Activated CD8-positive, alpha-beta T cell treated with anti-CD3 and anti-CD28 coated beads for 36 hours (primary cell): ENCODE measurements at regions of chr5 and their contacts with region 1.

Region 1: GRCh38 chr5:149667084-149667828 is 62.9 kb upstream of the PPARGC1B start:
- DNase-seq: peak; percentile 54
- ATAC-seq: peak; percentile 66
- H3K4me3 Mint-ChIP-seq: no peak overlapping the region
- H3K27ac Mint-ChIP-seq: no peak overlapping the region
- H3K4me1 Mint-ChIP-seq: no peaks in the 10 kb centered on the region
- H3K27me3 Mint-ChIP-seq: peaks cover 3% of the 10 kb centered on the region
- CTCF ChIP-seq: peak; percentile 86

Region 2: GRCh38 chr5:149063017-149063687 is 604.1 kb before region 1 on chr5 and contains the start of gene SH3TC2:
- CTCF ChIA-PET with region 1: no interaction called
- POLR2A ChIA-PET with region 1: no interaction called
- intact Hi-C with region 1: no loop called
- DNase-seq: no peak
- ATAC-seq: no peak
- H3K4me3 Mint-ChIP-seq: no peak within 1 kb of the TSS
- H3K27ac Mint-ChIP-seq: no peak within 1 kb of the TSS
- H3K4me1 Mint-ChIP-seq: no peaks in the 10 kb centered on the region
- H3K27me3 Mint-ChIP-seq: peaks cover 12% of the 10 kb centered on the region
- CTCF ChIP-seq: no peak
- total RNA-seq, gene SH3TC2: not detected

Region 3: GRCh38 chr5:149544028-149544420 is 123.2 kb before region 1 on chr5:
- CTCF ChIA-PET with region 1: no interaction called
- POLR2A ChIA-PET with region 1: no interaction called
- intact Hi-C with region 1: no loop called
- DNase-seq: no peak
- ATAC-seq: no peak
- H3K4me3 Mint-ChIP-seq: no peak overlapping the region
- H3K27ac Mint-ChIP-seq: peak overlapping the region; percentile 51
- H3K4me1 Mint-ChIP-seq: peaks cover 63% of the 10 kb centered on the region
- H3K27me3 Mint-ChIP-seq: no peaks in the 10 kb centered on the region
- CTCF ChIP-seq: no peak

Region 4: DNA sequence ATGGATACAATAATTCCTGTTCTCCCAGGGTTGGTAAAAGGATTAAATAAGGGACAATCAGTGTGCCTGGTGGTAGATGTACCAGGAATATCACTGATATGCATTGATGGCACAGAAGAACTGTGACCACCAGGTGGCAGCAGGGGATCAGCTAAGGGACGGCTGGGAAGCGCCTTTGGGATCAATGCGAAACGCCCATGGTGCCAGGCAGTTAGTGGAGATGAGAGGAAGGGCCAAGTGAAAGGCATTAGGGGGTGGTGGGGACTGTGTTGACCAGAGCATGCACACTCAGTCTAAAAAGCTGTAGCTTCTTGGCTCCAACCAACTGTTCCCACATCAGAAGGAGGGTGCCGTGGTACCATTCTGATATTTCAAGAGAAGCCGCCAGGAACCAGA is 30.4 kb before region 1 on chr5:
- CTCF ChIA-PET with region 1: interaction called, 18 read pairs
- POLR2A ChIA-PET with region 1: no interaction called
- intact Hi-C with region 1: no loop called
- DNase-seq: peak; percentile 81
- ATAC-seq: peak; percentile 65
- H3K4me3 Mint-ChIP-seq: no peak overlapping the region
- H3K27ac Mint-ChIP-seq: no peak overlapping the region
- H3K4me1 Mint-ChIP-seq: peaks cover 19% of the 10 kb centered on the region
- H3K27me3 Mint-ChIP-seq: no peaks in the 10 kb centered on the region
- CTCF ChIP-seq: peak; percentile 98

Region 5: DNA sequence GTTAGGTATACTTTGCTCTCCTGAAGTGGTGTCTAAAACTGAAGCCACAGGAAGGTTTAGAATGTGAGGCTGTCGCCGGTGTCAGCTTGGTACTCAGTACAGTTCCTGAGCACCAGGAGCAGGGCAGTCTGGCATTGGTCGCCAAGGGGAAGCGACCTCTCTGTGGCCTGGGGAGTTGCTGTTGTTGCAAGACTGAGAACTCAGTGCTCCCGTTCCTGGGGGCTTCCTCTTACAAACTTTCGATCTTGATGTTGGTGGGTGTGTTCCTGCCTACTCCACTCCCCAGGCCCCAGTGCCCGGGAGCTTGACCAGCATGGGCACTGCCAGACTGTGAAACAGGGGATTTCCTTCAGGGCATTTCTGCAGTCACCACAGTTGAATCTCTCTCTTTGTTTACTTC is 10.5 kb after region 1 on chr5:
- CTCF ChIA-PET with region 1: interaction called, 17 read pairs
- POLR2A ChIA-PET with region 1: no interaction called
- intact Hi-C with region 1: no loop called
- DNase-seq: no peak
- ATAC-seq: no peak
- H3K4me3 Mint-ChIP-seq: no peak overlapping the region
- H3K27ac Mint-ChIP-seq: no peak overlapping the region
- H3K4me1 Mint-ChIP-seq: no peaks in the 10 kb centered on the region
- H3K27me3 Mint-ChIP-seq: peaks cover 19% of the 10 kb centered on the region
- CTCF ChIP-seq: no peak

Region 6: GRCh38 chr5:149694007-149694406 is 26.8 kb after region 1 on chr5:
- CTCF ChIA-PET with region 1: interaction called, 13 read pairs
- POLR2A ChIA-PET with region 1: no interaction called
- intact Hi-C with region 1: no loop called
- DNase-seq: no peak
- ATAC-seq: no peak
- H3K4me3 Mint-ChIP-seq: no peak overlapping the region
- H3K27ac Mint-ChIP-seq: no peak overlapping the region
- H3K4me1 Mint-ChIP-seq: no peaks in the 10 kb centered on the region
- H3K27me3 Mint-ChIP-seq: peaks cover 13% of the 10 kb centered on the region
- CTCF ChIP-seq: no peak

Region 7: GRCh38 chr5:149820536-149821510 is 153.6 kb after region 1 on chr5:
- CTCF ChIA-PET with region 1: interaction called, 11 read pairs
- POLR2A ChIA-PET with region 1: no interaction called
- intact Hi-C with region 1: loop called (anchors 5 kb)
- DNase-seq: no peak
- ATAC-seq: no peak
- H3K4me3 Mint-ChIP-seq: no peak overlapping the region
- H3K27ac Mint-ChIP-seq: no peak overlapping the region
- H3K4me1 Mint-ChIP-seq: no peaks in the 10 kb centered on the region
- H3K27me3 Mint-ChIP-seq: no peaks in the 10 kb centered on the region
- CTCF ChIP-seq: no peak

Region 8: GRCh38 chr5:149904293-149904886 is 237.1 kb after region 1 on chr5:
- CTCF ChIA-PET with region 1: no interaction called
- POLR2A ChIA-PET with region 1: no interaction called
- intact Hi-C with region 1: no loop called
- DNase-seq: no peak
- ATAC-seq: no peak
- H3K4me3 Mint-ChIP-seq: no peak overlapping the region
- H3K27ac Mint-ChIP-seq: no peak overlapping the region
- H3K4me1 Mint-ChIP-seq: peaks cover 11% of the 10 kb centered on the region
- H3K27me3 Mint-ChIP-seq: peaks cover 11% of the 10 kb centered on the region
- CTCF ChIP-seq: no peak

Region 9: DNA sequence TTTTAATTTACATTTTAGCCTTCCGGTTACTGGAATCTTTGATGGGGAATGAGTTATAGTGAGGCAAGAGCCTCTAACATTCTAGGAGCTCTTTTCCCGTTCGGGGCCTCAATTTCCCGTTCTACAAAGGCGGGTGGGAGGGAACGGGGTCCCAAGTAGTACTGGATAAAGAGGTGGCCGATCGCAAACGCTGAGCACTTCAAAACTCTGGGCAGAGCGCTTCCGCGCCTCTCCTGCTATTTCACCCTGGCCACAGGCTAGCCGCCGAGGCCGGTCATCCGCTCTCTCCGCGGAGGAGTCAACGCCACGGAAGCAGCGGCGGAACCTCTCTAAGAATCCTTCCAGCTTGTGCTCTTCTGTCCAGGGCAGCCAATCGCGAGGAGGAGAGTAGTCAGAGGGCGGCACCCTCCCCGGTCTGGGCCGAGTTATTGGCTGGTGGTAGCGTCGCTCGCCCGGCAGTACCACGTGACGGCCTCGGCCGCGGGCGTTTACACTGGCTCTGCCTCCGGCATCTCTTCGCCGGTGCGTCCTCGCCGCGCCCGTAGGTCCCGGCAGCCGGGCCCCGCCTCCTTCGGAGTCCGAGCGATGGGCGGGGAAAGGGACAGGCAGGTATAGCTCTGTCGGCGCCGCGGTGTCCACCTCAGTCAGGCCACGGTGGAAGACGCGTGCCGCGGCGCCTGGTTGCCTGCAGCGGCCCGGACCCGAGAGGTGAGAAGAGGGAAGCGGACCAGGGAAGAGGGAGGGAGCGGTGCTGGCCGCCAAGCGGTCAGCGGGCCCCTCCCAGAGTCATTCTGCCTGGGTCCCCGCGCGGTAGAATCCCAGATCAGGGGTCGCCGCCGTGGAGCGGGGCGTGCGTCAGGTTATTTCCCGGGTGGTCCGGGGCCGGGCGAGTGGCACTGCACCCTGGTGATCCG is 293.3 kb after region 1 on chr5 and contains the start of gene SLC26A2:
- CTCF ChIA-PET with region 1: interaction called, 10 read pairs
- POLR2A ChIA-PET with region 1: interaction called, 4 read pairs
- intact Hi-C with region 1: no loop called
- DNase-seq: peak; percentile 97
- ATAC-seq: peak; percentile 96
- H3K4me3 Mint-ChIP-seq: peak within 1 kb of the TSS; percentile 95
- H3K27ac Mint-ChIP-seq: peak within 1 kb of the TSS; percentile 99
- H3K4me1 Mint-ChIP-seq: peaks cover 35% of the 10 kb centered on the region
- H3K27me3 Mint-ChIP-seq: no peaks in the 10 kb centered on the region
- CTCF ChIP-seq: no peak
- total RNA-seq, gene SLC26A2: 5.0 to 5.3 TPM